ENCODE measurements at regions of chr7 and their contacts with region 1.

Region 1: GRCh38 chr7:128862571-128863432 is at the start of gene ATP6V1F:
- DNase-seq: peak; percentile 97
- ATAC-seq: peak; percentile 85
- H3K4me3 ChIP-seq: peak within 1 kb of the TSS; percentile 84
- H3K27ac ChIP-seq: no peak within 1 kb of the TSS
- H3K4me1 ChIP-seq: peaks cover 5% of the 10 kb centered on the region; the same call in 1 of the 2 replicates
- H3K27me3 ChIP-seq: no peaks in the 10 kb centered on the region
- CTCF ChIP-seq: no peak
- total RNA-seq, gene ATP6V1F: 129 and 131 TPM in 2 replicates

Region 2: GRCh38 chr7:128781126-128781525 is 81.7 kb before region 1 on chr7:
- CTCF ChIA-PET with region 1: interaction called, 10 read pairs
- POLR2A ChIA-PET with region 1: interaction called, 5 read pairs
- intact Hi-C with region 1: no loop called
- DNase-seq: no peak
- ATAC-seq: no peak
- H3K4me3 ChIP-seq: no peak overlapping the region
- H3K27ac ChIP-seq: no peak overlapping the region
- H3K4me1 ChIP-seq: no peaks in the 10 kb centered on the region
- H3K27me3 ChIP-seq: no peaks in the 10 kb centered on the region
- CTCF ChIP-seq: no peak

Region 3: GRCh38 chr7:128827248-128827958 is 35.4 kb before region 1 on chr7:
- CTCF ChIA-PET with region 1: no interaction called
- POLR2A ChIA-PET with region 1: no interaction called
- intact Hi-C with region 1: loop called (anchors 1 kb)
- DNase-seq: peak; percentile 78
- ATAC-seq: peak; percentile 66
- H3K4me3 ChIP-seq: no peak overlapping the region
- H3K27ac ChIP-seq: peak overlapping the region; percentile 85
- H3K4me1 ChIP-seq: peaks cover 46% of the 10 kb centered on the region
- H3K27me3 ChIP-seq: no peaks in the 10 kb centered on the region
- CTCF ChIP-seq: no peak

Region 4: DNA sequence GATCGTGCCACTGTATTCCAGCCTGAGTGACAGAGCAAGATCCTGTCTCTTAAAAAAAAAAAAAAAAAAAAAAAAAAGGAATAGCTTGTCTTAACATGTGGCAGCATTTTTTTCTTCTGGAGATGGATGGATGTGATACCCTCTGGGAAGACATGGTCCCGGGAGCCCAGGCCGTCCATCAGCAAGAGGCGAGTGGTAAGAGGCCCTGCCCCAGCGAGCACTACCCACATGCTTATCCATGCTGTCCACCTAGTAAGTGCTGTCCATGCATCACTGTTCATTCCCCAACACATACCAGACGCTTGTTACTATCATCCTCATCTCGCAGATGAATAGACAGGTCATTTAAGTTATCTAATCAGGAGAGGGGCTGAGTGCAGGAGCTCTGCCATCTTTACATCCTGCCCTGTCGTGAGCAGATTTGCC is 12.7 kb after region 1 on chr7:
- CTCF ChIA-PET with region 1: interaction called, 9 read pairs
- POLR2A ChIA-PET with region 1: interaction called, 13 read pairs
- intact Hi-C with region 1: loop called (anchors 1 kb)
- DNase-seq: no peak
- ATAC-seq: no peak
- H3K4me3 ChIP-seq: no peak overlapping the region
- H3K27ac ChIP-seq: no peak overlapping the region
- H3K4me1 ChIP-seq: peaks cover 29% of the 10 kb centered on the region
- H3K27me3 ChIP-seq: no peaks in the 10 kb centered on the region
- CTCF ChIP-seq: no peak

Region 5: DNA sequence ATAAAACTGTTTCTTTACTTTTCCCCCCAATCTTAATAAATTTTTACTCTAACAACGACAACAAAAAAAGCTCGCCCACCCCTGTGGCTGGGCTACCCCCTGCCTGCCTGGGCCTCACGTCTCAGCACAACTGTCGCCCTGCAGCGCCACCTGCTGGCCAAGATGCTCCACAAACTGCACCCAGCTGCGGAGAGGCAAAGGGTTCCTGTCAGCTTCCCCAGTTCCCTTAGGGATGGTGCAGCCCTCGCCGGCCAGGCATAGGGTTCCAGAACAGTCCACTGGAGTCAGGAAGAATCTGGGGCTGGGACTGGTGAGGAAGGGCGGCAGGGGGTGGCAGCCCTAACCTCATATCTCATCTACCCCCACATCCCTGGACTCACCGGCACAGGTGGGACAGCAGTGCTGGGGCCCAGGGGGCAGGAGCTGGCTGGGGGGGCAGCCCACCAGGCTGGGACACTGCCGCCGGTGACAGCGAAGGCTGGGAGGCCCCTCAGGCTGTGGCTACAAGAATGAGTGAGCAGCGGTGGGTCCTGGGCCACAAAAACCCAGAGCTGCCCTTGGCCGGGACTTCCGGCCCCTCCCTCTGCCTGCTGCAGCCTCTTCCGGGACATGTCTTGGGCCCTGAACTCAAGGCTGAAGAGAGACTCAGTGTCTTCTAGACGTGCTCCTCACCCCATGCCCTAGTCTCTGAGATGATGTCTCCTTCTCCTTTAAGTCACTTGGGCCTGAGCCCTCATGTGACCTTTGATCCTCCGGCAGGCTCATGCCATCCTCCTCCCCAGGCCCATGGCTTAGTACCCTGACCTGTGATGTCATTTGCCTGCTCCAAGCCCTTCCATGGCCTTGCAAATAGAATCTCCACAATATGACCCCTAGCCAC is 21.1 kb after region 1 on chr7:
- CTCF ChIA-PET with region 1: interaction called, 9 read pairs
- POLR2A ChIA-PET with region 1: no interaction called
- intact Hi-C with region 1: loop called (anchors 1 kb)
- DNase-seq: peak; percentile 81
- ATAC-seq: peak; percentile 47
- H3K4me3 ChIP-seq: no peak overlapping the region
- H3K27ac ChIP-seq: no peak overlapping the region
- H3K4me1 ChIP-seq: peaks cover 10% of the 10 kb centered on the region
- H3K27me3 ChIP-seq: no peaks in the 10 kb centered on the region
- CTCF ChIP-seq: peak; percentile 94

Region 6: DNA sequence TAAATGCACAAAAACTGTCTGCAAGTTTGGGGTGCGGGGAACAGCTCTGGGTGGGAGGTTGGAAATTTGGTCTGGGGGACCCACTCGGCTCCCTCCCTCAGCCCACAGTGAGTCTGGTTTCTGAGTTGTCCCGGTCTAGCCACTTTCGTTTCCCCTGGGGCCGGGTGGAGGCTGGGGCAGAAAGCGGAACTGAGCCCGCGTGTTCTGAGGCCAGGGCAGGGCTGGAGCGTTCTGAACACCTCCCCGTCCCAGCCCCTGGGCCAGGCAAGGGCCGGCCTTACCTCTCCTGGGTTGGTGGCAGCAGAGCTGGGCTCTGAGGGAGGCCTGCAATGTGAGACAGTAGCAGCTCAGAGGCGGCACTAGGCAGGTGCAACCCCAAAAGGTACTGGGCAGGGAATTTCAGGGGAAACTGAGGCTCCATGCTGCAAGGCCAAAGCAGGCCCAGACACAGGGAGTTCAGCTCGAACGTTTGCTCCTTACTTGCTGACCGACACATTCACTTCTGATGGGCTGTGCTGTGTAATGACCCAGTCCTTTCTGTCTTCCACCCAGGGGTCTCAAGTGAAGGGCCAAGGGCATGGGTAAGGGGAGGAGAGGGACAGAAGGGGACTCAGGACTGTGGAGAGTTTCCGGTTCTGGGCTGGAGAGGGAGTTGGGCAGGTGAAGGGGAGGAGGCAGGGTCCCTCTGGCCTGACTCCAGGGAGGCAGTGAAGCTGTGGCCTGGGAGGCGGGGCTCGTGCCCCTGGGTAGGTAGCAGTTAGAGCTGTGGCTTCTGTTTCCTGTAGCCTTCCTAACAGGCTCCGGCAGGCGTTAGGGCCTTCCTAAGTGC is 77.9 kb after region 1 on chr7:
- CTCF ChIA-PET with region 1: no interaction called
- POLR2A ChIA-PET with region 1: no interaction called
- intact Hi-C with region 1: no loop called
- DNase-seq: no peak
- ATAC-seq: no peak
- H3K4me3 ChIP-seq: no peak overlapping the region
- H3K27ac ChIP-seq: no peak overlapping the region
- H3K4me1 ChIP-seq: no peaks in the 10 kb centered on the region
- H3K27me3 ChIP-seq: no peaks in the 10 kb centered on the region
- CTCF ChIP-seq: no peak

Measured in PC-3 (cell line).